ENCODE measurements at regions of chr16 and their contacts with region 1.

Region 1: GRCh38 chr16:79601931-79602627 is 1.5 kb upstream of the MAF start:
- DNase-seq: peak; percentile 90
- H3K4me3 Mint-ChIP-seq: peak overlapping the region; percentile 81
- H3K27ac Mint-ChIP-seq: no peak overlapping the region
- H3K4me1 Mint-ChIP-seq: peaks cover 18% of the 10 kb centered on the region
- H3K27me3 Mint-ChIP-seq: peaks cover 33% of the 10 kb centered on the region

Region 2: DNA sequence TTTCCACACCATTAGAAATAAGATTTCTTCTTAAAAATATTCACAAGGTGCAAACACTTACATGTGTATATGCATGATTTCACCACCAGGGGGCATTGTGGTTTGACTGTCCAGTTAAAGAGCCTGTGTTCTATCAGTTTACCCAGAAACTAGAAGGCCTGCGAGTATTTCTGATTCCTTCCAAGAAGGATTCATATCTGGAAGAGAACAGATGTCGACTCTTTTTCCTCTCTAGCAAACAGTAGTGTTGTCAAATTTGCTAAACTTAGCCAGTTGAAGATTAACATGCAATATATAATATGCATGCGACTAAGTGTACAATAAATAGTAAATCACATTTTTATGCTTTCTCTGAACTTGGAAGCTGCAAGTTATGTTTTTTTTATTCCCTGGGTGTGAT is 1098.5 kb before region 1 on chr16:
- CTCF ChIA-PET with region 1: no interaction called
- intact Hi-C with region 1: loop called (anchors 1 kb)
- DNase-seq: peak; percentile 71
- H3K4me3 Mint-ChIP-seq: no peak overlapping the region
- H3K27ac Mint-ChIP-seq: no peak overlapping the region
- H3K4me1 Mint-ChIP-seq: no peaks in the 10 kb centered on the region
- H3K27me3 Mint-ChIP-seq: no peaks in the 10 kb centered on the region

Region 3: GRCh38 chr16:78770353-78771091 is 831.6 kb before region 1 on chr16:
- CTCF ChIA-PET with region 1: no interaction called
- intact Hi-C with region 1: loop called (anchors 5 kb)
- DNase-seq: peak; percentile 84
- H3K4me3 Mint-ChIP-seq: no peak overlapping the region
- H3K27ac Mint-ChIP-seq: no peak overlapping the region
- H3K4me1 Mint-ChIP-seq: peaks cover 18% of the 10 kb centered on the region
- H3K27me3 Mint-ChIP-seq: no peaks in the 10 kb centered on the region

Region 4: GRCh38 chr16:79076047-79076767 is 525.9 kb before region 1 on chr16:
- CTCF ChIA-PET with region 1: interaction called, 4 read pairs
- intact Hi-C with region 1: loop called (anchors 5 kb)
- DNase-seq: peak; percentile 33
- H3K4me3 Mint-ChIP-seq: peak overlapping the region; percentile 25
- H3K27ac Mint-ChIP-seq: peak overlapping the region; percentile 83
- H3K4me1 Mint-ChIP-seq: peaks cover 43% of the 10 kb centered on the region
- H3K27me3 Mint-ChIP-seq: peaks cover 7% of the 10 kb centered on the region

Region 5: GRCh38 chr16:80466024-80466987 is 864.2 kb after region 1 on chr16:
- CTCF ChIA-PET with region 1: interaction called, 3 read pairs
- intact Hi-C with region 1: loop called (anchors 5 kb)
- DNase-seq: peak; percentile 68
- H3K4me3 Mint-ChIP-seq: no peak overlapping the region
- H3K27ac Mint-ChIP-seq: no peak overlapping the region
- H3K4me1 Mint-ChIP-seq: no peaks in the 10 kb centered on the region
- H3K27me3 Mint-ChIP-seq: no peaks in the 10 kb centered on the region